PC-9 (cell line): ENCODE measurements at regions of chr3 and their contacts with region 1.

Region 1: GRCh38 chr3:111936191-111936841 is 42.5 kb upstream of the ABHD10 start:
- DNase-seq: peak in 1 of 2 experiments; percentile 94
- H3K4me3 ChIP-seq: peak overlapping the region; percentile 2
- H3K27ac ChIP-seq: peak overlapping the region; percentile 90
- H3K4me1 ChIP-seq: peaks cover 45% of the 10 kb centered on the region
- H3K27me3 ChIP-seq: no peaks in the 10 kb centered on the region
- CTCF ChIP-seq: no peak

Region 2: DNA sequence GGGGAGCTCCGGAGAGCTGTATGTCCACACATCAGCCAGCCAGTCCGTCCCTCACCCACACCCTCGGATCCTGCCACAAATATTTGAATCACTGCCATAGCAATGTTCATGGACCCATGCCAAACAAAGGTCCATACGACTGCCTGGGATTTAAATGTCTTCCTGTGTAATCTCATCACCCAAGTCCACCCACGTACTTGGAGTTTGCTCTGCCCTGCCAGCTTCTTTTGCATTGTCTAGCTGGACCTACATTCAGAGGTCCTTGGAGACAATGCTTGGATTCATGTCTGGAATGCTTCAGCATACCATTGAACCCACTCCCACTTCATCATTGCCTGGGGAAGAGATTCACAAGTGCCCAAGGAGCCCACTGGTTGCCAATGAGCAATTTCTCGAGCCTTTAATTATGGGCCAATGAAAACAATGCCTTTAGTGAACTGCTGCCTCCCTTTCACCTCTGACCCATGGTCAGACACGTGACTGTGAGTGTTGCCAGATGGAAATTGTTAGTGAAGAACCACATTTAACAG is 167.7 kb before region 1 on chr3:
- CTCF ChIA-PET with region 1: no interaction called
- POLR2A ChIA-PET with region 1: no interaction called
- intact Hi-C with region 1: no loop called
- DNase-seq: peak in 1 of 2 experiments; percentile 54
- H3K4me3 ChIP-seq: no peak overlapping the region
- H3K27ac ChIP-seq: no peak overlapping the region
- H3K4me1 ChIP-seq: peaks cover 10% of the 10 kb centered on the region; the same call in 1 of the 2 replicates
- H3K27me3 ChIP-seq: no peaks in the 10 kb centered on the region
- CTCF ChIP-seq: no peak

Region 3: GRCh38 chr3:111831840-111832239 is 104.5 kb before region 1 on chr3:
- CTCF ChIA-PET with region 1: no interaction called
- POLR2A ChIA-PET with region 1: no interaction called
- intact Hi-C with region 1: no loop called
- DNase-seq: no peak
- H3K4me3 ChIP-seq: no peak overlapping the region
- H3K27ac ChIP-seq: no peak overlapping the region
- H3K4me1 ChIP-seq: peaks cover 6% of the 10 kb centered on the region; the same call in 1 of the 2 replicates
- H3K27me3 ChIP-seq: no peaks in the 10 kb centered on the region
- CTCF ChIP-seq: no peak

Region 4: GRCh38 chr3:111904376-111905241 is 31.7 kb before region 1 on chr3:
- CTCF ChIA-PET with region 1: no interaction called
- POLR2A ChIA-PET with region 1: no interaction called
- intact Hi-C with region 1: loop called (anchors 2 kb)
- DNase-seq: peak; percentile 47 to 99
- H3K4me3 ChIP-seq: no peak overlapping the region; the same call in 1 of the 2 replicates
- H3K27ac ChIP-seq: peak overlapping the region; percentile 96
- H3K4me1 ChIP-seq: peaks cover 55% of the 10 kb centered on the region
- H3K27me3 ChIP-seq: no peaks in the 10 kb centered on the region
- CTCF ChIP-seq: peak; percentile 30

Region 5: DNA sequence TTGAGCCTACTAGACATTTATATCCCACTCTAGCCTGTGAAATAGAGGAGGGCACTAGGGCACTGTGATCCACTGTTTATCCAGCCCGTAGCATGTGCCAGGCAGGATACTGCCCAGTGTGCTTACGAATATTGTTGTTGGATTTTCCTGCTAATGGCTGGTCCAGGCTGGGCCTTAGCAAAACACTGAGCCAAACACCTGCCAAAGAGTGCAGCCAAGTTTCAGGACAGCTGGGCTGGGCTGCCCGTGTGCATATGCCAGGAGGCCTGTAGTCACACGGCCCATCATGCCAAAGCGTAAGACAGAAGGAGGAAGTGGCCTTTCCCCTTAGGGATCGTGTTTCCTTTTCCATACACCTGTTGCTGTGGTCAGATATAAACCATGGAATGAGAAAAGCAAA is 12.0 kb before region 1 on chr3:
- CTCF ChIA-PET with region 1: interaction called, 5 read pairs
- POLR2A ChIA-PET with region 1: interaction called, 10 read pairs
- intact Hi-C with region 1: loop called (anchors 2 kb)
- DNase-seq: peak in 1 of 2 experiments; percentile 60
- H3K4me3 ChIP-seq: 0 out of 2 replicates have a peak overlapping the region, but pooled peaks have one; percentile 1
- H3K27ac ChIP-seq: peak overlapping the region; percentile 96
- H3K4me1 ChIP-seq: peaks cover 52% of the 10 kb centered on the region
- H3K27me3 ChIP-seq: no peaks in the 10 kb centered on the region
- CTCF ChIP-seq: no peak

Region 6: GRCh38 chr3:113035387-113035982 is 1099.2 kb after region 1 on chr3:
- CTCF ChIA-PET with region 1: no interaction called
- POLR2A ChIA-PET with region 1: no interaction called
- intact Hi-C with region 1: no loop called
- DNase-seq: peak; percentile 33 to 53
- H3K4me3 ChIP-seq: no peak overlapping the region
- H3K27ac ChIP-seq: no peak overlapping the region
- H3K4me1 ChIP-seq: no peaks in the 10 kb centered on the region
- H3K27me3 ChIP-seq: no peaks in the 10 kb centered on the region
- CTCF ChIP-seq: peak; percentile 92

Region 7: DNA sequence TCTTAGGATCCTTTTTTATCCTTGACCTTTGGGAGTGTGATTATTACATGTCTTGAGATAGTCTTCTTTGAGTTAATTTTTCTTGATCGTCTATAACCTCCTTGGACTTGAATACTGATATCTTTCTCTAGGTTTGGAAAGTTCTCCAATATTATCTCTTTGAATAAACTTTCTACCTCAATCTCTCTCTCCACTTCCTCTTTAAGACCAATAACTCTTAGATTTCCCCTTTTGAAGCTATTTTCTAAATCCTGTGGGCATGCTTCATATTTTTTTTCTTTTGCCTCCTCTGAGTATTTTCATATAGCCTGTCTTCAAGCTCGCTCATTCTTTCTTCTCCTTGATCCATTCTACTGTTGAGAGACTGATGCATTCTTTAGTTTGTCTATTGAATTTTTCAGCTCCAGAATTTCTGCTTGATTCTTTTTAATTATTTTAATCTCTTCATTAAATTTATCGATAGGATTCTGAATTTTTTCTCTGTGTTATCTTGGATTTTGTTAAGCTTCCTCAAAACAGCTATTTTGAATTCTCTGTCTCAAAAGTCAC is 1748.0 kb after region 1 on chr3:
- CTCF ChIA-PET with region 1: no interaction called
- POLR2A ChIA-PET with region 1: interaction called, 10 read pairs
- intact Hi-C with region 1: no loop called
- DNase-seq: no peak
- H3K4me3 ChIP-seq: no peak overlapping the region
- H3K27ac ChIP-seq: no peak overlapping the region
- H3K4me1 ChIP-seq: no peaks in the 10 kb centered on the region
- H3K27me3 ChIP-seq: no peaks in the 10 kb centered on the region
- CTCF ChIP-seq: no peak